ENCODE measurements at regions of chr4 and their contacts with region 1.

Region 1: DNA sequence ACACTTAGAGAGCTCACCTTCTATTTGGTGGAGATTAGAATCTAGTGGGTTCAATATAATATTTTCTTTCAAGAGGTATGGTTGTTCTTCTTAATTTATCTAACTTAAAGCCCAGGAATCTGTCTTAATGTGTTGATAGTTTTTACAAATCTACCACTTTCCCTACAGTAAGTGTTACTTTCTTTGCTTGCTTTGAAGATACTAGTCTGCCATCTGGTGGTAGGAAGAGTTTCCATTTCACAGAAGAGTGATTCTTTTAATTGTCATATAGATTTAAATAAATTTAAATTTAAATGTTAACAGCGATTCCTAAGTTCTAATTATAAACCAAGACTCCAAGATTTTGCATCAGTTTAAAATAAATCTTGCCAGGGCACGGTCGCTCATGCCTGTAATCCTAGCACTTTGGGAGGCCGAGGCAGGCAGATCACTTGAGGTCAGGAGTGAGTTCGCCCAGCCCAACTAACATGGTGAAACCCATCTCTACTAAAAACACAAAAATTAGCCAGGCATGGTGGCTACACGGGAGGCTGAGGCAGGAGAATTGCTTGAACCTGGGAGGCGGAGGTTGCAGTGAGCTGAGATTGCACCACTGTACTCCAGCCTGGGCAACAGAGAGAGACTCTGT is 43.5 kb downstream of the NUDT9 start:
- DNase-seq: no peak
- ATAC-seq: peak in 1 of 4 donors; percentile 58
- H3K4me3 ChIP-seq: no peak overlapping the region
- H3K27ac ChIP-seq: no peak overlapping the region
- H3K4me1 ChIP-seq: peaks cover 0 to 4% (median 0%) of the 10 kb centered on the region in 12 donors
- H3K27me3 ChIP-seq: no peaks in the 10 kb centered on the region
- CTCF ChIP-seq: peak; percentile 43 to 81 (median 69)
- POLR2A ChIP-seq: no peak

Region 2: GRCh38 chr4:87144356-87144755 is 321.5 kb before region 1 on chr4:
- intact Hi-C with region 1: loop called in 1 of 10 experiments (anchors 10 kb)
- DNase-seq: no peak
- ATAC-seq: no peak
- H3K4me3 ChIP-seq: no peak overlapping the region
- H3K27ac ChIP-seq: no peak overlapping the region
- H3K4me1 ChIP-seq: peaks cover 0 to 11% (median 0%) of the 10 kb centered on the region in 12 donors
- H3K27me3 ChIP-seq: no peaks in the 10 kb centered on the region
- CTCF ChIP-seq: no peak
- POLR2A ChIP-seq: no peak

Region 3: DNA sequence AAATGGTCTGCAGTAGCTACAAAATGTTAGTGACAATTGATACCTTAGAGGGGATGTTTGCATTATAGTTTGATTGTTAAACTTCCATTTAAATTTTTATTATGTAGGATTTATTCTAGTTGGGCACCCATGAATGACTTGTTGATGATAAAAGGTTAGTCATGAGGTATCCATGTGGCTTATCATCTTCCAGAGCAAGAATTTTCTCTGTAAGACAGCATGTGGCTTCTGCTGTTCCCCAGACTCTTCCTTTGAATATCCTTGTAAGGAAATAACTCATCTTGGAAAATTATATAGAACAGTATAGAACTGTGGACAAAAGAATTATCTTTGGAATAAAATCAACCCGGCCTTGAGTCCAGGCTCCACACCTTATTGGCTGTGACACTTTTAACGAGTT is 205.4 kb before region 1 on chr4:
- intact Hi-C with region 1: loop called in 2 of 10 experiments (anchors 5 to 10 kb)
- DNase-seq: no peak
- ATAC-seq: no peak
- H3K4me3 ChIP-seq: no peak overlapping the region
- H3K27ac ChIP-seq: no peak overlapping the region
- H3K4me1 ChIP-seq: no peaks in the 10 kb centered on the region
- H3K27me3 ChIP-seq: no peaks in the 10 kb centered on the region
- CTCF ChIP-seq: no peak
- POLR2A ChIP-seq: no peak

Region 4: GRCh38 chr4:87353592-87353991 is 112.3 kb before region 1 on chr4:
- intact Hi-C with region 1: loop called in 5 of 10 experiments (anchors 5 kb)
- DNase-seq: peak in 3 of 5 donors; percentile 24 to 48 (median 31)
- ATAC-seq: peak in 3 of 4 donors; percentile 52 to 70 (median 65)
- H3K4me3 ChIP-seq: peak overlapping the region in 1 of 12 donors; percentile 7
- H3K27ac ChIP-seq: peak overlapping the region in 9 of 12 donors; percentile 5 to 76 (median 36)
- H3K4me1 ChIP-seq: peaks cover 0 to 21% (median 2%) of the 10 kb centered on the region in 12 donors
- H3K27me3 ChIP-seq: no peaks in the 10 kb centered on the region
- CTCF ChIP-seq: peak; percentile 36 to 77 (median 59)
- POLR2A ChIP-seq: no peak

Region 5: DNA sequence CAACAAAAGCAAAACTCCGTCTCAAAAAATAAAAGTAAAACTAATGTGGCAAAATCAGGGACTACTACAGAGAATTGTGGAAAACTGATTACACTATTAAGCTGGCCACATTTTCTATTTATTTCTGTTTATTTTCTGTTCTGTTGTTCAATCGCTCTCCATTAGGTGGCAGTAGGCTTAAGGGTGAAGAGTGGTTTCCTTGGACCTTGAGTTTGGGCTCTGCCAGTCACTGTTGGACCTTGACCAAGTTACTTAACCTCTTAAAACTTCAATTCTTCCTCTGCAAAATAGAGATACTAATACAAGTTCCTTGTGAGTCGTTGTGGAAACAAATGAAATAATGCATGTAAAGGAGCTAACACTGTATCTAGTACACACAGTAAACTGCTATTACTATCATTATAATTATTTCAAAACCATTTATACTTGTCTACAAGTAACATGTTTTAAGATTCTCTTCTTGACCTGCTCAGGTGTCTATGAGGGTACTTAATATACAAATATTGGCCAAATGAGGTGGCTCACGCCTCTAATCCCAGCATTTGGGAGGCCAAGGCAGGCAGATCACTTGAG is 90.0 kb before region 1 on chr4:
- intact Hi-C with region 1: loop called (anchors 1 to 5 kb)
- DNase-seq: no peak
- ATAC-seq: peak; percentile 55 to 86 (median 65)
- H3K4me3 ChIP-seq: no peak overlapping the region
- H3K27ac ChIP-seq: peak overlapping the region in 1 of 12 donors; percentile 25
- H3K4me1 ChIP-seq: peaks cover 0 to 9% (median 3%) of the 10 kb centered on the region in 12 donors
- H3K27me3 ChIP-seq: no peaks in the 10 kb centered on the region
- CTCF ChIP-seq: peak; percentile 44 to 80 (median 68)
- POLR2A ChIP-seq: no peak